ENCODE measurements at regions of chr3 and their contacts with region 1.

Region 1: DNA sequence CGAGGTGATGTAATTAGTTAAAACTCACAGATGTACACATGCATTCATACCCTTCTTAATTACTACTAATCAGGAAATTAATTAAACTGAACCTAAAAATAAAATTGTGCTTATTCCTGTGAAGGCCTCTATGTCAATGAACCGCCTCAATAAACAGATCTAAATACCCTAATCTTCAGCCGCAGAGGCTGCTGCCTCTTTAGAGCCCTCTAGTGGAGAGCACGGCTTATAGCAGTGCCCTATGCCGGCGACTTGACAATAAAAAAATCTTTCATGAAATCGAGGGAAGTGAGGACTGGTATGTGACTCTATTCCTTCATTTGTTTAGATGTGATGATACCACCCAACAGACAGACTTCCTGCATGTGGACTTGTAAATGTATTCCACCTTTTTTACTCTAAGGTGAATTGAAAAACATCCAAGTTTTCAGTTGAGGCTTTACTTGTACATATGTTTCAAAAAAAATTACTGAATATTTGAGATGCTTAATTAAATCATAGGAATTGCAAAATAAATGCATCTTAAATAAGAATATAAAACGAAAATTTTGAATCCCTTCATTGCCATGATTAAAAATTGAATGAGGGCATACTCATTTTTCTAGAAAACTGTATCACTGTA is 8.3 kb upstream of the EPHA3 start:
- DNase-seq: peak; percentile 56
- ATAC-seq: peak; percentile 96
- H3K4me3 ChIP-seq: no peak overlapping the region
- H3K27ac ChIP-seq: no peak overlapping the region
- H3K4me1 ChIP-seq: no peaks in the 10 kb centered on the region
- H3K27me3 ChIP-seq: no peaks in the 10 kb centered on the region; the same call in 1 of the 2 replicates
- CTCF ChIP-seq: peak; percentile 90
- POLR2A ChIP-seq: no peak; the same call in 1 of the 2 replicates
- RAD21 ChIP-seq: peak; percentile 86

Region 2: DNA sequence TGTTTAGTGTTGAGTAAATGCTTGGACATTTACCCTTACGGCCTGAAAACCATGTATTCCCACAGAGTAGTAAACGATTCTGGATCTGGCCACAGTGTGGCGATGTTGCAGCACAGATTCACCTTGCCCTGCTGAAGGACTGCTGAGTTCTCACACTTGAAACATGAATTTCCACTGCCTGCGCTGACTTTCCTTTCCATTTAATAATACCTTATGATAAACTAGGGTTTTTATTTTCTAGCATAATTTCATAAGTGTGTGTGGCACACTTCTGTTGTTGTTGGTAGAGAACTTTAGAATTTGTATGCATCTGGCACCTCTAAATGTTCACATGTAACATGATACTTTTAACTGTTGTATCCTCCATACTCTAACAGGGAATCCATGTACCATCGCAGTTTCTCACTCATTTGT is 895.4 kb before region 1 on chr3:
- CTCF ChIA-PET with region 1: no interaction called
- POLR2A ChIA-PET with region 1: no interaction called
- dilution Hi-C with region 1: no loop called
- in situ Hi-C with region 1: loop called (anchors 10 kb)
- intact Hi-C with region 1: loop called (anchors 5 kb)
- DNase-seq: peak; percentile 67
- ATAC-seq: peak; percentile 100
- H3K4me3 ChIP-seq: no peak overlapping the region
- H3K27ac ChIP-seq: no peak overlapping the region
- H3K4me1 ChIP-seq: no peaks in the 10 kb centered on the region
- H3K27me3 ChIP-seq: 0 out of 2 replicates have a peak, but pooled peaks cover 1% of the 10 kb centered on the region
- CTCF ChIP-seq: peak; percentile 83
- POLR2A ChIP-seq: no peak
- RAD21 ChIP-seq: peak; percentile 87

Region 3: GRCh38 chr3:88219138-88219792 is 879.8 kb before region 1 on chr3:
- CTCF ChIA-PET with region 1: interaction called, 4 read pairs
- POLR2A ChIA-PET with region 1: no interaction called
- dilution Hi-C with region 1: no loop called
- in situ Hi-C with region 1: no loop called
- intact Hi-C with region 1: loop called (anchors 2 kb)
- DNase-seq: peak; percentile 49
- ATAC-seq: peak; percentile 87
- H3K4me3 ChIP-seq: no peak overlapping the region
- H3K27ac ChIP-seq: no peak overlapping the region
- H3K4me1 ChIP-seq: no peaks in the 10 kb centered on the region
- H3K27me3 ChIP-seq: no peaks in the 10 kb centered on the region
- CTCF ChIP-seq: peak; percentile 65
- POLR2A ChIP-seq: no peak
- RAD21 ChIP-seq: peak; percentile 70

Region 4: DNA sequence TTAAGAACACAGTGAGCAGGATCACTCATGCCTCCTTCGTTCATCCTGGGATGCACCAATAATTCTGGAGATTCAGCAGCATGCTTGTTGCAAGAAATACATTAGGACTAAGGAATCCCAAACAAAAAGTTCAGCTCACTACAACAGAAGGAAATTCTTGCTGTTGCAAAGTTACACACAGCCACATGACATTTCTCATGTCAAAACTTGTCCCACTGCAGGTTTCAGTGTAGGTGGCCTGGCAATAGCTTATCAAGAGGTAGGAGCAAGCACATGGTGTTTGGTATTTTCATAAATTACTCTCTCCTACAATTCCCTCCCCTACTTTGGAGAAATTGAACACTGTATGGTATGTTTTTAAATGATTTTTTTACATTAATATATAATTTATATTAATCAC is 391.2 kb before region 1 on chr3:
- CTCF ChIA-PET with region 1: no interaction called
- POLR2A ChIA-PET with region 1: no interaction called
- dilution Hi-C with region 1: no loop called
- in situ Hi-C with region 1: no loop called
- intact Hi-C with region 1: loop called (anchors 10 kb)
- DNase-seq: no peak
- ATAC-seq: no peak
- H3K4me3 ChIP-seq: no peak overlapping the region
- H3K27ac ChIP-seq: no peak overlapping the region
- H3K4me1 ChIP-seq: no peaks in the 10 kb centered on the region
- H3K27me3 ChIP-seq: no peaks in the 10 kb centered on the region
- CTCF ChIP-seq: no peak
- POLR2A ChIP-seq: no peak
- RAD21 ChIP-seq: no peak

Measured in IMR-90 (cell line).